Spleen (tissue), 13 donors: ENCODE measurements at regions of chr3 and their contacts with region 1.

Region 1: GRCh38 chr3:68876112-68876713 is 56.1 kb downstream of the TAFA4 start:
- DNase-seq: no peak
- H3K4me3 ChIP-seq: no peak overlapping the region
- H3K27ac ChIP-seq: no peak overlapping the region
- H3K4me1 ChIP-seq: no peaks in the 10 kb centered on the region
- H3K27me3 ChIP-seq: peaks cover 0 to 17% (median 0%) of the 10 kb centered on the region in 7 donors
- CTCF ChIP-seq: peak; percentile 25 to 87 (median 76)
- POLR2A ChIP-seq: no peak

Region 2: DNA sequence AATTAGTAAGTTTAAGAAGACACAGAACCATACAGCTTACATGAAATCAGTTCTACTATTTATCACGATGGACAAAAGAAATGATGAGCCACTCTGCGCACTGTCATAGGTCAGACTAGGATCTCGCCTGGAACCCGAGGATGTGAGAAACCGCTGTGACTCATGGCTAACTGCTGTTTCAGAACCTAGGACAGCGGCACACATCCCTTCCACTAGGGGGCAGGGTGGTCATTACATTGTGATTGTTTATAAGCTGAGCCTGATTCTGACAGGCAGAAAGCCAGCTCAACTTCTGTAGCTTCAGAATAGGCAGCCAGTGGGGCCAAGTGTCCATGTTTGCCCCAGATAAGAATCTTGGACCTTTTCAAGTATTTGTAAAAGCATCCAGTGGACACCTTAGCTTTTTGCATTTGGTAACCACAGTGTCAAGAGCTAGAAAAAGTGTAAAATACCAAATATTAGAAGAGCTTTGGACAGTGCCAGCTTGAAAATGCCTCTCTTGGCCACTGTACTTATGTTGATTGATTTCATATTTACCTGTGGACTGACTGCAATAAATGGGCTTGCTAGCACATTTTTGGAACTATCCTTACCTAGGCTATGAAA is 1762.3 kb before region 1 on chr3:
- intact Hi-C with region 1: loop called (anchors 5 kb)
- DNase-seq: peak; percentile 81
- H3K4me3 ChIP-seq: no peak overlapping the region
- H3K27ac ChIP-seq: no peak overlapping the region
- H3K4me1 ChIP-seq: no peaks in the 10 kb centered on the region
- H3K27me3 ChIP-seq: peaks cover 0 to 10% (median 0%) of the 10 kb centered on the region in 7 donors
- CTCF ChIP-seq: peak; percentile 54 to 90 (median 77)
- POLR2A ChIP-seq: no peak

Region 3: GRCh38 chr3:67377299-67377698 is 1498.9 kb before region 1 on chr3:
- intact Hi-C with region 1: loop called (anchors 10 kb)
- DNase-seq: no peak
- H3K4me3 ChIP-seq: no peak overlapping the region
- H3K27ac ChIP-seq: no peak overlapping the region
- H3K4me1 ChIP-seq: peaks cover 0 to 25% (median 9%) of the 10 kb centered on the region in 6 donors
- H3K27me3 ChIP-seq: no peaks in the 10 kb centered on the region
- CTCF ChIP-seq: no peak
- POLR2A ChIP-seq: no peak

Region 4: DNA sequence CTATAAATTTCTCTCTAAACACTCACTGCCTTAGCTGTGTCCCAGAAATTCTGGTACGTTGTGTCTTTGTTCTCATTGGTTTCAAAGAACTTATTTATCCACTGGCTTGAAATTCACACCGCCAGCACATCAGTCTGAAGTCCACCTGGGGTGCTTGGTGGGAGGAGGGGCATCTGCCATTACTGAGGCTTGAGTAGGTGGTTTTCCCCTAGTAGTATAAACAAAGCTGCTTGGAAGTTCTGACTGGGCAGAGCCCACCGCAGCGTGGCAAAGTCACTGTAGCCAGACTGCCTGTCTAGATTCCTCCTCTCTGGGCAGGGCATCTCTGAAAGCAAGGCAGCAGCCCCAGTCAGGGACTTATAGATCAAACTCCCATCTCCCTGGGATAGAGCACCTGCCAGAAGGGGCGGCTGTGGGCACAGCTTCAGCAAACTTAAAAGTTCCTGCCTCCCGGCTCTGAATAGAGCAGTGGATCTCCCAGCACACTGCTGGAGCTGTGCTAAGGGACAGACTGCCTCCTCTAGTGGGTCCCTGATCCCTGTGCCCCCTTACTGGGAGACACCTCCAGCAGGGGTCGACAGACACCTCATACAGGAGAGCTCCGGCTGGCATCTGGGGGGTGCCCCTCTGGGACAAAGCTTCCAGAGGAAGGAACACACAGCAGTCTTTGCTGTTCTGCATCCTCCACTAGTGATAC is 1335.9 kb before region 1 on chr3:
- intact Hi-C with region 1: no loop called
- DNase-seq: peak; percentile 68
- H3K4me3 ChIP-seq: no peak overlapping the region
- H3K27ac ChIP-seq: no peak overlapping the region
- H3K4me1 ChIP-seq: peaks cover 0 to 15% (median 0%) of the 10 kb centered on the region in 6 donors
- H3K27me3 ChIP-seq: no peaks in the 10 kb centered on the region
- CTCF ChIP-seq: no peak
- POLR2A ChIP-seq: no peak

Region 5: DNA sequence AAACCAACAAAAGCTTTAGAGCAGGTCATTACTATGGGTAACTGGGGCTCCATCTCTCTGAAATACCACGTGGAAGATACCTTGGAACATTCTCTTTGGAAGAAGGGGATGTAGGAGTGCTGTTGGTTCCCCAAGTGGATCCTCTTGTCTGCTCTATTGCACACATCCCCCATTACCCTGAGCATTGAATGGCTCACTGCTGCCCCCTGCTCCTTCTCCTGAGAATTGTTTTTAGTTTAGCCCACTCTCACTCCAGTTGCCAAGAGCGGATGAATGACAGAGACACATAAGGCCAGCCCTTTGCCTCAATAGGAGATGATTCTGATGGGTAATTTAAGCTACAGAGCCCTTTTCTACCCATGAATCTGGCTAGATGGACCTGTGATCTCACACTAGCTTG is 1086.2 kb before region 1 on chr3:
- intact Hi-C with region 1: no loop called
- DNase-seq: no peak
- H3K4me3 ChIP-seq: no peak overlapping the region
- H3K27ac ChIP-seq: no peak overlapping the region
- H3K4me1 ChIP-seq: no peaks in the 10 kb centered on the region
- H3K27me3 ChIP-seq: no peaks in the 10 kb centered on the region
- CTCF ChIP-seq: peak; percentile 40 to 85 (median 67)
- POLR2A ChIP-seq: no peak

Region 6: DNA sequence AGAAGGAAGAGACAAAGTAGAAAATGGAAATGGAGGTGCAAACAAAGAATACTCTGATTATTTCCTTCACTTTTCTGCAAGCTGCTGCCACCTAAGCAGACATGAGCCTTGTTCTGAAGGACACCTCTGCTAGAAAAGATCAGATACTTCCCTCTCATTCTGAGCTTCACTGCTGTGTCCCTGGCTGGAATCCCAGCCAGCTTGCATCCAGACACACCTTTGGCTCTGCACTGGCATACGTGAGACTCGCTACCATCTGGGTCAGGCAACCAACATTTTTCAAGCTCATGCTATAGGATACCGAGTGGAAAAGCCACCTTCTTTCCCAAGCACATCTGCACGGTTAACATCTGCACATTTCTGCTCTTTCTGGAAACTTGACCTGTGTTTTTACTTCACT is 1055.1 kb before region 1 on chr3:
- intact Hi-C with region 1: loop called (anchors 10 kb)
- DNase-seq: no peak
- H3K4me3 ChIP-seq: no peak overlapping the region
- H3K27ac ChIP-seq: no peak overlapping the region
- H3K4me1 ChIP-seq: no peaks in the 10 kb centered on the region
- H3K27me3 ChIP-seq: no peaks in the 10 kb centered on the region
- CTCF ChIP-seq: no peak
- POLR2A ChIP-seq: no peak